BJ (cell line): ENCODE measurements at regions of chr3 and their contacts with region 1.

Region 1: DNA sequence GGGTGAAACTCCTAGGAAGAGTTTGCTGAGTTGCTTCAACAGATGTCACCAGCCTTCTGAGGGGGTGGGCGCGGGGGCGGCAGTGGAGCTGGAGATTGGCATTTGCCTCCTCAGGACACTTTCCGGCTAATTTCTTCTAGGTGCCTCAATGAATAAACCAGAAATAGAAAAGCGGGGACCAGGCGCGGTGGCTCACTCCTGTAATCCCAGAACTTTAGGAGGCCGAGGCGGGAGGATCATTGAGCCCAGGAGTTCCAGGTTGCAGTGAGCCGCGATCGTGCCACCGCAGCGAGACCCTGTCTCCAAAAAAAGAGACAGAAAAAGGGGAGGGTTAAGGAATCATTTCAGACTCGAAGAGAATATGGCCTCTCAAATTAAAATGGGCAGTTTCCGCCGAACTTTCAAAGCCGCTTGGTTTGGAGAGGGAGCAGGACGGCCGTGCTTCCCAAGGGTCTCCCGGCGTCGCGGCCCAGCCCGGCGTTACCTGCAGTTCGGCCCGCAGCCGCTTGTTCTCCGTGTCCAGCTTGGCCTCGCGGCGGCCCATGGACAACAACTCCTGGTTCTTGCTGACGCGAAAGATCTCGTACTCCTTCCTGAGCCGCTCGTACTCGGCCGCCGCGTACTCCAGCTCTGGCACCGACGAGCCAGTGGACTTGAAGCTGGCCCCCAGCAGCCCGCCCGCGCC is 588 bp downstream of the NPHP3 start:
- DNase-seq: no peak
- H3K4me3 ChIP-seq: peak overlapping the region; percentile 87
- H3K27me3 ChIP-seq: no peaks in the 10 kb centered on the region
- CTCF ChIP-seq: peak; percentile 36; the same call in 1 of the 2 replicates

Region 2: DNA sequence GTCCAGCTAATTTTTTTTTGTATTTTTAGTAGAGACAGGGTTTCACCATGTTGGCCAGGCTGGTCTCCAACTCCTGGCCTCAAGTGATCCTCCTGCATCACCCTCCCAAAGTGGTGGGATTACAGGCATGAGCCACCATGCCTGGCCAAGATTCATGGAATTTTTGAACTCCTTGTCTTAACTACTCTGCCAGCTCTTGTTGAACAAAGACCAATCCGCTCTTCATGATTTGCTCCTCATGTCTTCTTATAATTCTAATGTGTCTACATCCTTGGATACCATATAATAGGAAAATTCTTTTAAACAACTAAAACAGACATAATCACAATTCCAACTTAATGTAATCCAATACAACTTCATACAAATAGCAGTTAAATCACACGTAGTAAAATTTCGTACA is 40.2 kb before region 1 on chr3:
- CTCF ChIA-PET with region 1: no interaction called
- POLR2A ChIA-PET with region 1: interaction called, 19 read pairs
- DNase-seq: no peak
- H3K4me3 ChIP-seq: no peak overlapping the region
- H3K27me3 ChIP-seq: no peaks in the 10 kb centered on the region
- CTCF ChIP-seq: no peak